SK-N-SH (cell line): ENCODE measurements at regions of chr15 and their contacts with region 1.

Region 1: DNA sequence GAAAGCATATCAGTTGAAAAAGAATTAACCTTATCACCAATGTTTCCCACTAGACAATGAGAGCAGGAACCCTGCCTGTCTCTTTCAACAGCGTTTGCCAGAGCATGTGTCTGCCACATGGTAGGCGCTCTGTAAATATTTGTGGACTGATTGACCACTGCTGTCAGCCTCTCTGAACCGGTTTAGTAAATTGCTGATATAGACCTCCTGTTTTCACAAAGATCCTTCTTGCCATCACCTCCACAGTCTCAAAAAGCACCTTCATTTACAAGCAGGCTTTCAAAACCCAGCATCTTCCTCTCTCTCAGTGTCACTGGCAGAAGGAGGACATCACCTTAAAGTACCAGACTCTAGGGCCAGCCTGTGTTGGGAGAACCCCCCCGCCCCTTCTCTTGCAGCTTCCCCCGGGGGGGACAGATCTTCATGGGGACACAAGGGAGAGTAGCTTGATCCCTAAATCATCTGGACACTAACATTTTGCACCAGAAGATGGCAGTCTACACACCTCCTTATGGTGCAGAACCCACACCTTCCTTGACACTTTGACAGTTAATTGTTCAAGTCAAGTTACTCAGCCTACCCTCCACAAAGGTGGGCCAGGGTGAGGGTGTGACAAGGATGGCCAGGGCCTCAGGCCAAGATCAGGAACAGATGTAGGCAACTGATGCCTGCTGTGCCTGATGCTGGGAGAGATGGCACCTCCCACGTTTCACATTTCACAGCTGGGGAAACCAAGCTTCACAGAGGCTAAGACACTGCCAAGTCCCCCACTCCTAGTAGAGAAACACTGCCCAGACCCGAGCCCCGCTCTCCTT is 37.8 kb upstream of the USP3 start:
- DNase-seq: peak; percentile 72
- H3K4me3 ChIP-seq: no peak overlapping the region
- H3K27ac ChIP-seq: no peak overlapping the region
- H3K4me1 ChIP-seq: peaks cover 9 to 14% of the 10 kb centered on the region in 2 experiments; a peak in 2 of 4 replicates
- H3K27me3 ChIP-seq: no peaks in the 10 kb centered on the region
- CTCF ChIP-seq: peak; percentile 75
- EP300 ChIP-seq: no peak
- RAD21 ChIP-seq: peak; percentile 65

Region 2: GRCh38 chr15:63288778-63289378 is 177.7 kb before region 1 on chr15:
- CTCF ChIA-PET with region 1: interaction called, 10 read pairs
- POLR2A ChIA-PET with region 1: interaction called, 3 read pairs
- DNase-seq: peak; percentile 66
- H3K4me3 ChIP-seq: peak overlapping the region in 1 of 2 experiments; percentile 40; a peak in 1 of 4 replicates
- H3K27ac ChIP-seq: peak overlapping the region in 1 of 2 experiments; percentile 34; a peak in 1 of 4 replicates
- H3K4me1 ChIP-seq: peaks cover 0 to 21% of the 10 kb centered on the region in 2 experiments; a peak in 2 of 4 replicates
- H3K27me3 ChIP-seq: no peaks in the 10 kb centered on the region
- CTCF ChIP-seq: peak; percentile 88
- EP300 ChIP-seq: no peak
- RAD21 ChIP-seq: peak; percentile 95

Region 3: GRCh38 chr15:63442080-63442479 is 24.5 kb before region 1 on chr15:
- CTCF ChIA-PET with region 1: interaction called, 13 read pairs
- POLR2A ChIA-PET with region 1: no interaction called
- DNase-seq: no peak
- H3K4me3 ChIP-seq: no peak overlapping the region
- H3K27ac ChIP-seq: no peak overlapping the region
- H3K4me1 ChIP-seq: peaks cover 3 to 19% of the 10 kb centered on the region in 2 experiments
- H3K27me3 ChIP-seq: no peaks in the 10 kb centered on the region
- CTCF ChIP-seq: no peak
- EP300 ChIP-seq: no peak
- RAD21 ChIP-seq: no peak

Region 4: GRCh38 chr15:63480441-63480821 is 13.8 kb after region 1 on chr15:
- CTCF ChIA-PET with region 1: interaction called, 21 read pairs
- POLR2A ChIA-PET with region 1: interaction called, 4 read pairs
- DNase-seq: no peak
- H3K4me3 ChIP-seq: no peak overlapping the region
- H3K27ac ChIP-seq: no peak overlapping the region
- H3K4me1 ChIP-seq: peaks cover 0 to 18% of the 10 kb centered on the region in 2 experiments; a peak in 1 of 4 replicates
- H3K27me3 ChIP-seq: no peaks in the 10 kb centered on the region
- CTCF ChIP-seq: no peak
- EP300 ChIP-seq: no peak
- RAD21 ChIP-seq: no peak

Region 5: GRCh38 chr15:63504247-63504978 is 37.8 kb after region 1 on chr15 and contains the start of gene USP3:
- CTCF ChIA-PET with region 1: interaction called, 10 read pairs
- POLR2A ChIA-PET with region 1: no interaction called
- DNase-seq: peak; percentile 98
- H3K4me3 ChIP-seq: peak within 1 kb of the TSS; percentile 90 to 91
- H3K27ac ChIP-seq: peak within 1 kb of the TSS; percentile 84 to 93
- H3K4me1 ChIP-seq: peaks cover 22 to 30% of the 10 kb centered on the region in 2 experiments; a peak in 3 of 4 replicates
- H3K27me3 ChIP-seq: no peaks in the 10 kb centered on the region
- CTCF ChIP-seq: no peak
- EP300 ChIP-seq: no peak
- RAD21 ChIP-seq: peak; percentile 29; the same call in 1 of the 2 replicates
- polyA plus RNA-seq, gene USP3: 9.3 and 10.8 TPM in 2 replicates